CD4-positive, alpha-beta memory T cell (primary cell): ENCODE measurements at regions of chr18 and their contacts with region 1.

Region 1: GRCh38 chr18:63518178-63519012 is 23.8 kb upstream of the SERPINB12 start:
- DNase-seq: peak; percentile 44 to 57 (median 49)
- H3K4me3 ChIP-seq: no peak overlapping the region
- H3K4me3 Mint-ChIP-seq: no peak overlapping the region
- H3K27ac ChIP-seq: no peak overlapping the region
- H3K27ac Mint-ChIP-seq: no peak overlapping the region
- H3K4me1 ChIP-seq: no peaks in the 10 kb centered on the region
- H3K4me1 Mint-ChIP-seq: peaks cover 0 to 5% (median 4%) of the 10 kb centered on the region in 4 donors
- H3K27me3 ChIP-seq: peaks cover 3% of the 10 kb centered on the region
- H3K27me3 Mint-ChIP-seq: peaks cover 9 to 12% of the 10 kb centered on the region in 2 donors

Region 2: DNA sequence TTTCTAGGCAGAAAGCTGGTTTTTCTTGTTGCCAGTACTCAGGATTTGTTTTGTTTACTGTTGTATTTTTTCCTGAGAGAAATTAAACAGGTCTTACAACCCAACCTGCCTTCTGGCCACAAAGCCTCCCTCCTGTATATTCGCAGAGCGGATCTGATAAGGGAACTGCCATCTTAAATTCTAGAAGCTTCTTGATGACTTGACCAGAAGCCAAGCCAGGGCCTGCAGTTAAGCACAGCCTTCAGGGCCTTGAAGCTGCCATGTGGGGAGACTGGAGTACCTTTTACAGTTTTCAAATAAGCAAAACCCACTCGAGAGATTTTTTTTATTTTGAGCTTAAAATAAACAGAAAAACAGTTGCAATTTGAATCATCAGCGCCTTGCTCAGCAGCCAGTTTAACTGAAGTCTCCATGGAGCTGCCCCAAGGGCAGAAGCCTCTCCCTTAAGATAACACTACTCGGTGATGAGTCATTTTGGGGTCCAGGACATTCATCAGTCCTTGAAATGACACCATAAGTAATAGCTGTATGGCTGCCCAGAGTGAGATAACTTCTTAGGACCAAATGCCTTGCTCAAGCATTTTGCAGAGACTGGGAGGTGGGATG is 854.6 kb before region 1 on chr18:
- CTCF ChIA-PET with region 1: no interaction called
- POLR2A ChIA-PET with region 1: no interaction called
- intact Hi-C with region 1: no loop called
- DNase-seq: no peak
- H3K4me3 ChIP-seq: no peak overlapping the region
- H3K4me3 Mint-ChIP-seq: no peak overlapping the region
- H3K27ac ChIP-seq: no peak overlapping the region
- H3K27ac Mint-ChIP-seq: no peak overlapping the region
- H3K4me1 ChIP-seq: no peaks in the 10 kb centered on the region
- H3K4me1 Mint-ChIP-seq: no peaks in the 10 kb centered on the region
- H3K27me3 ChIP-seq: no peaks in the 10 kb centered on the region
- H3K27me3 Mint-ChIP-seq: peaks cover 0 to 1% of the 10 kb centered on the region in 2 donors

Region 3: GRCh38 chr18:63465059-63465458 is 53.3 kb before region 1 on chr18:
- CTCF ChIA-PET with region 1: no interaction called
- POLR2A ChIA-PET with region 1: no interaction called
- intact Hi-C with region 1: no loop called
- DNase-seq: no peak
- H3K4me3 ChIP-seq: no peak overlapping the region
- H3K4me3 Mint-ChIP-seq: no peak overlapping the region
- H3K27ac ChIP-seq: no peak overlapping the region
- H3K27ac Mint-ChIP-seq: no peak overlapping the region
- H3K4me1 ChIP-seq: no peaks in the 10 kb centered on the region
- H3K4me1 Mint-ChIP-seq: no peaks in the 10 kb centered on the region
- H3K27me3 ChIP-seq: no peaks in the 10 kb centered on the region
- H3K27me3 Mint-ChIP-seq: peaks cover 11% of the 10 kb centered on the region in 2 donors

Region 4: GRCh38 chr18:63487676-63488075 is 30.7 kb before region 1 on chr18:
- CTCF ChIA-PET with region 1: interaction called, 17 read pairs
- POLR2A ChIA-PET with region 1: no interaction called
- intact Hi-C with region 1: no loop called
- DNase-seq: no peak
- H3K4me3 ChIP-seq: no peak overlapping the region
- H3K4me3 Mint-ChIP-seq: no peak overlapping the region
- H3K27ac ChIP-seq: no peak overlapping the region
- H3K27ac Mint-ChIP-seq: no peak overlapping the region
- H3K4me1 ChIP-seq: no peaks in the 10 kb centered on the region
- H3K4me1 Mint-ChIP-seq: no peaks in the 10 kb centered on the region
- H3K27me3 ChIP-seq: no peaks in the 10 kb centered on the region
- H3K27me3 Mint-ChIP-seq: peaks cover 10 to 17% of the 10 kb centered on the region in 2 donors

Region 5: GRCh38 chr18:63505566-63506335 is 12.6 kb before region 1 on chr18:
- CTCF ChIA-PET with region 1: interaction called, 41 read pairs
- POLR2A ChIA-PET with region 1: no interaction called
- intact Hi-C with region 1: no loop called
- DNase-seq: peak in 2 of 5 donors; percentile 0 to 4
- H3K4me3 ChIP-seq: no peak overlapping the region
- H3K4me3 Mint-ChIP-seq: no peak overlapping the region
- H3K27ac ChIP-seq: no peak overlapping the region
- H3K27ac Mint-ChIP-seq: no peak overlapping the region
- H3K4me1 ChIP-seq: no peaks in the 10 kb centered on the region
- H3K4me1 Mint-ChIP-seq: no peaks in the 10 kb centered on the region
- H3K27me3 ChIP-seq: no peaks in the 10 kb centered on the region
- H3K27me3 Mint-ChIP-seq: peaks cover 15 to 30% of the 10 kb centered on the region in 2 donors

Region 6: GRCh38 chr18:63848159-63848558 is 329.8 kb after region 1 on chr18:
- CTCF ChIA-PET with region 1: interaction called, 3 read pairs
- POLR2A ChIA-PET with region 1: no interaction called
- intact Hi-C with region 1: loop called (anchors 5 kb)
- DNase-seq: no peak
- H3K4me3 ChIP-seq: no peak overlapping the region
- H3K4me3 Mint-ChIP-seq: no peak overlapping the region
- H3K27ac ChIP-seq: no peak overlapping the region
- H3K27ac Mint-ChIP-seq: no peak overlapping the region
- H3K4me1 ChIP-seq: no peaks in the 10 kb centered on the region
- H3K4me1 Mint-ChIP-seq: no peaks in the 10 kb centered on the region
- H3K27me3 ChIP-seq: no peaks in the 10 kb centered on the region
- H3K27me3 Mint-ChIP-seq: peaks cover 5 to 12% of the 10 kb centered on the region in 2 donors

Region 7: GRCh38 chr18:63963615-63964256 is 445.3 kb after region 1 on chr18:
- CTCF ChIA-PET with region 1: interaction called, 10 read pairs
- POLR2A ChIA-PET with region 1: no interaction called
- intact Hi-C with region 1: no loop called
- DNase-seq: peak; percentile 57 to 71 (median 61)
- H3K4me3 ChIP-seq: no peak overlapping the region
- H3K4me3 Mint-ChIP-seq: no peak overlapping the region
- H3K27ac ChIP-seq: no peak overlapping the region
- H3K27ac Mint-ChIP-seq: peak overlapping the region in 2 of 7 donors; percentile 2 to 25
- H3K4me1 ChIP-seq: no peaks in the 10 kb centered on the region
- H3K4me1 Mint-ChIP-seq: peaks cover 0 to 2% (median 0%) of the 10 kb centered on the region in 4 donors
- H3K27me3 ChIP-seq: no peaks in the 10 kb centered on the region
- H3K27me3 Mint-ChIP-seq: peaks cover 0 to 6% of the 10 kb centered on the region in 2 donors

Region 8: DNA sequence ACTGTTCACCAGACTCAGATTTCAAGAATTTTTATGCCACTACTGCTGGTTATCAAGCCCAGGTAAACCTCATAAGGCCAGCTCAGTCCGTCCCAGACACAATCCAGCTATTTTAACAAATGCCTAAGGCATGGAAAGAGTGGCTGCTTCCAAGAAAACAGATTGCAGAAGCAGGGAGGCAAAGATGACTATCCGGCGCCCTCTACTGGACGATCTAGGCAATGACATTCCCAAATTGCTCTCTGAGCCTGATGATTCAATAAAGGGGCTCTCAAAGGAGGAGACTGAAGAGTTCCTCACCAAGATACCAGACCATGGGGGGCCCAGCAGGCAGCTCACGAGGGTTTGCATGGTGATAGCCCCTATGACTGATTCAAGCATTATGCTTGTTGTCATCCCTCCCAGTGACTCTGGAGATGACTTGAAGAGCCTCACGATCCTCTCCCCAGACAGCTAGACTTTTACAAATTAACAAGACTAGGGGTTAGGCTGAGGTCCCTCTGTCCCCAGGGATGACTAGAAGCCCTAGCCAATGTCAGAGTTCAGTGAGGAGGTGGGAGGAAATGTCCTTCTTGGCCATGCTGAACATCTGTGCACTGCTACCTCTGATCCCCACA is 476.5 kb after region 1 on chr18:
- CTCF ChIA-PET with region 1: interaction called, 36 read pairs
- POLR2A ChIA-PET with region 1: no interaction called
- intact Hi-C with region 1: loop called (anchors 1 kb)
- DNase-seq: peak in 4 of 5 donors; percentile 20 to 36 (median 28)
- H3K4me3 ChIP-seq: no peak overlapping the region
- H3K4me3 Mint-ChIP-seq: no peak overlapping the region
- H3K27ac ChIP-seq: no peak overlapping the region
- H3K27ac Mint-ChIP-seq: no peak overlapping the region
- H3K4me1 ChIP-seq: no peaks in the 10 kb centered on the region
- H3K4me1 Mint-ChIP-seq: peaks cover 0 to 9% (median 8%) of the 10 kb centered on the region in 4 donors
- H3K27me3 ChIP-seq: no peaks in the 10 kb centered on the region
- H3K27me3 Mint-ChIP-seq: peaks cover 1 to 2% of the 10 kb centered on the region in 2 donors